H1 (cell line): ENCODE measurements at regions of chr11 and their contacts with region 1.

Region 1: DNA sequence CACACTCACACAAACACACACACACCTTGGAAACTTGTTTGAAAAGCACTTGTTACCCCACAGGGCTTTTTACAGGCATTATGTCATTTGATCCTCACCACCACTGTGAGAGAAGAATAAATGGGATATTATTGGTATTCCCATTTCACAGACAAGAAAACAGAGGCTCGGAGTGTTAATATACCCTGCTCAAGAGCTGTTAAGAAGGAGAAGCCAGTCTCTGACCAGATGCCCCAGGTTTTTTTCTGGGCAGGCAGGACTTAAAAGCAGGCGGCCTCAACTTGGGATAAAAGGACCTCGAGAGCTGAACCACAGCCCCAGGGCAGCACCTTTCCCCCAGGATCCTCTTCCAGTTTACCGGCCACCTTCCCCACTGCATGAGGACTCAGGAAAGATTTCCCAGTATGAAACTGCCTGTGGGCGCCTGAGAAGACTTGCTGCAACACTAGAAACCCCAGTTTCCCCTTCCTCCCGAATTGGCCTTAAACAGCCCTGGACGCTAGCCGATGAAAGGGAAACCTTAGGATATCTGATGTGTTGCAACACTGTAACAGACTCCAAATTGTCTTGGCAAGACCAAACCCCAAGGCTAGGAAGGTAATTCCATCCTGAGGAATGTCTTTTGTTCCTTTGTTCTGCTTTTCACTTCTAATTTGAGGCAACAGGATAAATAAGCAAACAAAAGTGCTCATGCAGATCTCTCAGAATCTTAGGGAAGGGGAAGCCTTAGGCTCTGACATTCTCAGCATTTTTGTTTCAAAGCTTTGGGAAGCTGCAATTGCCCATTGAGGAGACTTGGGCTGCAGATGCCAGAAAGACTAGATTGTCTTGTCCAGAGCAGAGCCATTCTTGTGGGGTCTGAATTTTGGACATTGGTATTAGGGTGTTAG is 173.5 kb downstream of the TRIM29 start:
- DNase-seq: peak in 1 of 2 experiments; percentile 50
- H3K4me3 ChIP-seq: no peak overlapping the region; a peak in 2 of 8 replicates
- H3K27ac ChIP-seq: peak overlapping the region; percentile 68
- H3K4me1 ChIP-seq: peaks cover 4 to 13% (median 9%) of the 10 kb centered on the region in 4 experiments; a peak in 6 of 7 replicates
- H3K27me3 ChIP-seq: no peaks in the 10 kb centered on the region
- CTCF ChIP-seq: no peak
- EP300 ChIP-seq: 0 out of 3 replicates have a peak, but pooled peaks of 1 of the 2 experiments have one; percentile 15
- POLR2A ChIP-seq: no peak
- RAD21 ChIP-seq: no peak; a peak in 1 of 4 replicates

Region 2: GRCh38 chr11:119919656-119920055 is 44.7 kb before region 1 on chr11:
- CTCF ChIA-PET with region 1: no interaction called
- POLR2A ChIA-PET with region 1: no interaction called
- DNase-seq: no peak
- H3K4me3 ChIP-seq: no peak overlapping the region
- H3K27ac ChIP-seq: no peak overlapping the region
- H3K4me1 ChIP-seq: no peaks in the 10 kb centered on the region; a peak in 1 of 7 replicates
- H3K27me3 ChIP-seq: no peaks in the 10 kb centered on the region; a peak in 2 of 7 replicates
- CTCF ChIP-seq: no peak
- EP300 ChIP-seq: no peak
- POLR2A ChIP-seq: no peak
- RAD21 ChIP-seq: no peak

Region 3: GRCh38 chr11:119942583-119943297 is 21.6 kb before region 1 on chr11:
- CTCF ChIA-PET with region 1: interaction called, 12 read pairs
- POLR2A ChIA-PET with region 1: interaction called, 3 read pairs
- DNase-seq: no peak
- H3K4me3 ChIP-seq: no peak overlapping the region
- H3K27ac ChIP-seq: no peak overlapping the region
- H3K4me1 ChIP-seq: peaks cover 2 to 6% (median 3%) of the 10 kb centered on the region in 4 experiments; a peak in 4 of 7 replicates
- H3K27me3 ChIP-seq: no peaks in the 10 kb centered on the region; a peak in 1 of 7 replicates
- CTCF ChIP-seq: no peak
- EP300 ChIP-seq: no peak
- POLR2A ChIP-seq: no peak
- RAD21 ChIP-seq: no peak